GM12878 (cell line): ENCODE measurements at regions of chr21 and their contacts with region 1.

Region 1: GRCh38 chr21:42414928-42415769 is 11.4 kb downstream of the UBASH3A start:
- DNase-seq: peak; percentile 97
- ATAC-seq: peak; percentile 88
- H3K4me3 ChIP-seq: 0 out of 2 replicates have a peak overlapping the region, but pooled peaks have one; percentile 13
- H3K27ac ChIP-seq: peak overlapping the region; percentile 95
- H3K4me1 ChIP-seq: peaks cover 47% of the 10 kb centered on the region
- H3K27me3 ChIP-seq: no peaks in the 10 kb centered on the region
- CTCF ChIP-seq: no peak
- EP300 ChIP-seq: peak; percentile 89 to 95; a peak in 3 of 4 replicates
- POLR2A ChIP-seq: peak; percentile 63; the same call in 1 of the 2 replicates
- RAD21 ChIP-seq: peak; percentile 18; the same call in 1 of the 2 replicates

Region 2: GRCh38 chr21:42209819-42210479 is 205.2 kb before region 1 on chr21:
- CTCF ChIA-PET with region 1: no interaction called
- POLR2A ChIA-PET with region 1: no interaction called
- RAD21 ChIA-PET with region 1: no interaction called
- SMC1A ChIA-PET with region 1: no interaction called
- in situ Hi-C with region 1: no loop called
- intact Hi-C with region 1: no loop called
- DNase-seq: no peak
- ATAC-seq: no peak
- H3K4me3 ChIP-seq: no peak overlapping the region
- H3K27ac ChIP-seq: no peak overlapping the region
- H3K4me1 ChIP-seq: no peaks in the 10 kb centered on the region
- H3K27me3 ChIP-seq: no peaks in the 10 kb centered on the region; a peak in 1 of 4 replicates
- CTCF ChIP-seq: no peak
- EP300 ChIP-seq: no peak
- POLR2A ChIP-seq: no peak
- RAD21 ChIP-seq: no peak

Region 3: GRCh38 chr21:42350896-42351543 is 64.1 kb before region 1 on chr21 and contains the start of gene TFF2:
- CTCF ChIA-PET with region 1: no interaction called
- POLR2A ChIA-PET with region 1: no interaction called
- RAD21 ChIA-PET with region 1: no interaction called
- SMC1A ChIA-PET with region 1: no interaction called
- in situ Hi-C with region 1: no loop called
- intact Hi-C with region 1: no loop called
- DNase-seq: no peak
- ATAC-seq: no peak
- H3K4me3 ChIP-seq: no peak within 1 kb of the TSS
- H3K27ac ChIP-seq: no peak within 1 kb of the TSS
- H3K4me1 ChIP-seq: no peaks in the 10 kb centered on the region
- H3K27me3 ChIP-seq: no peaks in the 10 kb centered on the region
- CTCF ChIP-seq: no peak
- EP300 ChIP-seq: no peak
- POLR2A ChIP-seq: no peak
- RAD21 ChIP-seq: no peak
- polyA plus RNA-seq, gene TFF2: not detected

Region 4: DNA sequence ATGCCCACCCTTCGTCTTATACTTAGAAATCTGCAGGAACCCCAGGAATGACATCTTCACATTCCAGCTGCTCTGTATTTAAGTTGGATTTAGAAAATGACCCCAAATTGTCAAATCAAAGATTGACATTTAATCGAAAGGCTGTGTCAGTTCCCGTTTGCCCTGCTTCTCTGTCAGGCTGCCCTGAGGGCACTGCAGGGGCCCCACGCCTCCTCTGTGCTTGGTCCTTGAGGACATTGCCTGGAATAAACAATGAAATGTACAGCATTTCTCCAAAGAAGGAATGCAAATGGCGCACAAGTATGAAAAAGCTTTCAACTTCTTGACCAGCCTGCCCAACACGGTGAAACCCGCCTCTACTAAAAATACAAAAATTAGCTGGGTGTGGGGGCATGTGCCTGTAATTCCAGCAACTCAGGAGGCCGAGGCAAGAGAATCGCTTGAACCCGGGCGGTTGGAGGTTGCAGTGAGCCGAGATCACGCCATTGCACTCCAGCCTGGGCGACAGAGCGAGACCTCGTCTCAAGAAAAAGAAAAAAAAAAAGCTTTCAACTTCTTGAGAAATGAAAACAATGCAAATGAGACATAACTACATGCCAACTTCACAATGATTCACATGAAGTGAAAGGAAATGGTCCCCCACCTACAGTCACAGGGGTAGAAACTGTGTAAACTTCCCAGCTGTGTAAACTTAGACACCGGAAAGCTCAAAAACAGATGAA is 22.3 kb before region 1 on chr21:
- CTCF ChIA-PET with region 1: interaction called, 5 read pairs
- POLR2A ChIA-PET with region 1: interaction called, 22 read pairs
- RAD21 ChIA-PET with region 1: interaction called, 54 read pairs
- SMC1A ChIA-PET with region 1: interaction called, 124 read pairs
- in situ Hi-C with region 1: no loop called
- intact Hi-C with region 1: loop called (anchors 1 kb)
- DNase-seq: peak; percentile 96
- ATAC-seq: peak; percentile 91
- H3K4me3 ChIP-seq: peak overlapping the region; percentile 33; the same call in 1 of the 2 replicates
- H3K27ac ChIP-seq: peak overlapping the region; percentile 91
- H3K4me1 ChIP-seq: peaks cover 53% of the 10 kb centered on the region
- H3K27me3 ChIP-seq: no peaks in the 10 kb centered on the region
- CTCF ChIP-seq: no peak
- EP300 ChIP-seq: peak in 1 of 2 experiments; percentile 13; a peak in 1 of 4 replicates
- POLR2A ChIP-seq: no peak
- RAD21 ChIP-seq: peak; percentile 34

Region 5: GRCh38 chr21:42400525-42400924 is 14.6 kb before region 1 on chr21:
- CTCF ChIA-PET with region 1: interaction called, 5 read pairs
- POLR2A ChIA-PET with region 1: interaction called, 34 read pairs
- RAD21 ChIA-PET with region 1: interaction called, 19 read pairs
- SMC1A ChIA-PET with region 1: interaction called, 10 read pairs
- in situ Hi-C with region 1: no loop called
- intact Hi-C with region 1: no loop called
- DNase-seq: peak; percentile 68
- ATAC-seq: peak; percentile 82
- H3K4me3 ChIP-seq: no peak overlapping the region
- H3K27ac ChIP-seq: peak overlapping the region; percentile 2; the same call in 1 of the 2 replicates
- H3K4me1 ChIP-seq: peaks cover 10% of the 10 kb centered on the region; the same call in 1 of the 2 replicates
- H3K27me3 ChIP-seq: no peaks in the 10 kb centered on the region
- CTCF ChIP-seq: no peak
- EP300 ChIP-seq: no peak
- POLR2A ChIP-seq: no peak
- RAD21 ChIP-seq: no peak

Region 6: DNA sequence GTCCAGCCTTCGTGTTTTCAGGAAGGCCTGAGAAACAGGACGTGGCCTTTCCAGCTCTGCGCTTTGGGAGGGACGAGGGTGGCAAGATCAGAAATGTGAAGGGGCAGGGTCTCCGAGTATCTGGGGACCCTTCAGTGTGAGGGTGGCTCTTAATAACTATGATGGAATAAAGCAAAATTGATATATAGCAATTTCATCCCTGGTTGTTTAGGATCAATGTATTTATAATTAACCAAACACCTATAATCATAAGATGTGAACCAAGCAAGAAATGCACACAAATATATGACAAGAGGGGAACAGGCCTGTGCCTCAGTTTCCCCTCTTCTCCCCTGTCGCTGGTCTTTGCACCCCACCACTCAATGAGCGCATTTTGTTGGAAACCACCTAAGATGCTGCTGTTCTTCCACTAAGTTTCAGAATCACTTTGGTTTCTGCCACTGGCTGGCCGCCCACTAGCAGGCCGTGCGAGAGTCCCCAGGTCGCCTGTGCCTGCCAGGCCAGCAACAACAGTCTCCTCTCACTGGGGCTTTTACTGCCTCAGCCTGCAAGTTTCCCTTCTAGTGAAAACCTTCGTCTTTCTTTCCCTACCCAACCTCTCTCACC is 25.1 kb after region 1 on chr21:
- CTCF ChIA-PET with region 1: interaction called, 9 read pairs
- POLR2A ChIA-PET with region 1: interaction called, 8 read pairs
- RAD21 ChIA-PET with region 1: interaction called, 81 read pairs
- SMC1A ChIA-PET with region 1: interaction called, 14 read pairs
- in situ Hi-C with region 1: no loop called
- intact Hi-C with region 1: loop called (anchors 1 kb)
- DNase-seq: peak; percentile 70
- ATAC-seq: peak; percentile 96
- H3K4me3 ChIP-seq: no peak overlapping the region
- H3K27ac ChIP-seq: peak overlapping the region; percentile 59
- H3K4me1 ChIP-seq: peaks cover 18% of the 10 kb centered on the region
- H3K27me3 ChIP-seq: no peaks in the 10 kb centered on the region
- CTCF ChIP-seq: no peak
- EP300 ChIP-seq: peak; percentile 56 to 81; a peak in 3 of 4 replicates
- POLR2A ChIP-seq: no peak
- RAD21 ChIP-seq: peak; percentile 31; the same call in 1 of the 2 replicates

Region 7: DNA sequence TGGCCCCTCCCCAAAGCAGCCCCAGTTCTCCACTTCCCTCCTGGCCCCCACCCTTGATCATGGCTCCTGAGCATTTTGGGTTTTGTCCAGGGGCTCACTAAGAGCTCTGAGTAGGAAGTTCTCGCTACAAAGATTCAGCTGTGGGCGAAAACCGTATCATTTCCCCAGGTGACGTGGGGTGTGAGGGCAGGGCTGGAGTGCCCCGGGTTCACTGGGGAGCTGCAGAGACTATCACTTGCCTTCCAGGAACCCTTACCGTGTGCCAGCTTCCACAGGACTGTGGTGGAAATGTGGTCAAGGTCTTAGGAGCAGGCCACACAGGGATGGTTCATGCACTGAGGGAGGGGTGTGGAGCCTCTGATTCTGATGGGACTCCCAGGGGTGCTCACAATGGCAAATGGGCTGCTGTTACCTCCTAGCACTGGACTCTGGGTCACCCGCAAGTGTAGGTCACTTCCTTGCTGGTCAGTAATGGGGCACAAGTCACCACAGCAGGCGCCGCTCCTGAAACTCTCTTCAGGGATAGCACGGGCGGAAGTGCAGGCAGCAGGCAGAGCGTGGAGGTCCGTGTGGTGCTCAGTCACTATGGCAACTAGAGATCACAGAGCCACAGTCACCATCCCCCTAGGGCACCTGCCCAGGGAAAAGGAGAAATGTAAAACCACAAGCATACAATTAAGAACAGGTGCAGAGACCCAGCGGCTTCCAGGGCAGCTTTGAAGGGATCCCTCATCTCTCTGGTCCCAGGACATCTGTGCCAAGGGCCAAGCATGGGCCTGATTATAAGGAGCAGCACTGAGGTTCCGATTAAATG is 45.4 kb after region 1 on chr21:
- CTCF ChIA-PET with region 1: interaction called, 3 read pairs
- POLR2A ChIA-PET with region 1: interaction called, 3 read pairs
- RAD21 ChIA-PET with region 1: no interaction called
- SMC1A ChIA-PET with region 1: interaction called, 10 read pairs
- in situ Hi-C with region 1: no loop called
- intact Hi-C with region 1: no loop called
- DNase-seq: peak; percentile 83
- ATAC-seq: peak; percentile 71
- H3K4me3 ChIP-seq: no peak overlapping the region
- H3K27ac ChIP-seq: peak overlapping the region; percentile 60
- H3K4me1 ChIP-seq: peaks cover 52% of the 10 kb centered on the region
- H3K27me3 ChIP-seq: no peaks in the 10 kb centered on the region
- CTCF ChIP-seq: no peak
- EP300 ChIP-seq: peak; percentile 59 to 97; a peak in 3 of 4 replicates
- POLR2A ChIP-seq: no peak
- RAD21 ChIP-seq: no peak

Region 8: GRCh38 chr21:42705746-42706374 is 290.7 kb after region 1 on chr21:
- CTCF ChIA-PET with region 1: no interaction called
- POLR2A ChIA-PET with region 1: no interaction called
- RAD21 ChIA-PET with region 1: no interaction called
- SMC1A ChIA-PET with region 1: no interaction called
- in situ Hi-C with region 1: no loop called
- intact Hi-C with region 1: no loop called
- DNase-seq: no peak
- ATAC-seq: no peak
- H3K4me3 ChIP-seq: no peak overlapping the region
- H3K27ac ChIP-seq: no peak overlapping the region
- H3K4me1 ChIP-seq: no peaks in the 10 kb centered on the region
- H3K27me3 ChIP-seq: peaks cover 0 to 1% of the 10 kb centered on the region in 2 experiments; a peak in 3 of 4 replicates
- CTCF ChIP-seq: no peak
- EP300 ChIP-seq: no peak
- POLR2A ChIP-seq: no peak
- RAD21 ChIP-seq: no peak

Region 9: GRCh38 chr21:42837421-42838211 is 422.5 kb after region 1 on chr21:
- CTCF ChIA-PET with region 1: no interaction called
- POLR2A ChIA-PET with region 1: no interaction called
- RAD21 ChIA-PET with region 1: no interaction called
- SMC1A ChIA-PET with region 1: no interaction called
- in situ Hi-C with region 1: no loop called
- intact Hi-C with region 1: no loop called
- DNase-seq: no peak
- ATAC-seq: no peak
- H3K4me3 ChIP-seq: no peak overlapping the region
- H3K27ac ChIP-seq: no peak overlapping the region
- H3K4me1 ChIP-seq: peaks cover 3% of the 10 kb centered on the region
- H3K27me3 ChIP-seq: no peaks in the 10 kb centered on the region
- CTCF ChIP-seq: no peak
- EP300 ChIP-seq: no peak
- POLR2A ChIP-seq: peak; percentile 24
- RAD21 ChIP-seq: no peak